GM12878 (cell line): ENCODE measurements at regions of chr14 and their contacts with region 1.

Region 1: DNA sequence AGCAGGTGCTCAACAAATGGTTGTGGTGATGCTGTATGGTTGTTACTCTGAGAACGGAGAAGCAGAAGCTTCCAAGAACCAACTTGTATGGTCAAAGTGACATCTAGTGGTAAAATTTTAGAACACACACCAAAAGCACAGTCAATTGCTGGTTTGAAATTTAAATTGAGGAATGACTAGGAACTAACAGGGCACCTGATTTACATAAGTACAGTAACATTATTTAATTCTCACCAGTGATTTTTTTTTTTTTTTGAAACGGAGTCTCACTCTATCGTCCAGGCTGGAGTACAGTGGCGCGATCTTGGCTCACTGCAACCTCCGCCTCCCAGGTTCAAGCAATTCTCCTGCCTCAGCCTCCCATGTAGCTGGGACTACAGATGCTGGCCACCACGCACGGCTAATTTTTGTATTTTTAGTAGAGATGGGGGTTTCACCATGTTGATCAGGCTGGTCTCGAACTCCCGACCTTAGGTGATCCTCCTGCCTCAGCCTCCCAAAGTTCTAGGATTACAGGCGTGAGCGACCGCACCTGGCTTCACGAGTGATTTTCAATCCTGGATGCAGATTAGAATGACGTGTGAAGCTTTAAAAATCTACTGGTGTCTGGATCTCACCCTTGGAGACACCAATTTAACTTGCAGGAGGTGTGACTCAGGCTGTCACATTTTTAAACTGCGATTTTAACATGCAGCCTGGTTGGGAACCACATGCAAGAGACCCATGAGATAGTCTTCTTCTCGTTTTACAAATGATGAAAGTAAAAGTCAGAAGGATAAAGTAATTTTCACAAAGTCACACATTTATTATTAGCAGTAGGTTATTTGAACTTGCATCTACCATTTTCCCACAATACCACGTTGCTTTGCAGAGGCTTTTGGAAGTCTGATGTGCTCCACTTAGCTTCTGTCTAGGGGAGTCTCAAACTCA is 14.1 kb upstream of the NUMB start:
- DNase-seq: peak; percentile 57
- ATAC-seq: peak; percentile 86
- H3K4me3 ChIP-seq: no peak overlapping the region
- H3K27ac ChIP-seq: peak overlapping the region; percentile 29; the same call in 1 of the 2 replicates
- H3K4me1 ChIP-seq: peaks cover 15% of the 10 kb centered on the region
- H3K27me3 ChIP-seq: no peaks in the 10 kb centered on the region
- CTCF ChIP-seq: peak; percentile 56 to 82 (median 65); a peak in 5 of 6 replicates
- EP300 ChIP-seq: peak in 1 of 2 experiments; percentile 39; a peak in 1 of 4 replicates
- POLR2A ChIP-seq: no peak
- RAD21 ChIP-seq: peak; percentile 99

Region 2: DNA sequence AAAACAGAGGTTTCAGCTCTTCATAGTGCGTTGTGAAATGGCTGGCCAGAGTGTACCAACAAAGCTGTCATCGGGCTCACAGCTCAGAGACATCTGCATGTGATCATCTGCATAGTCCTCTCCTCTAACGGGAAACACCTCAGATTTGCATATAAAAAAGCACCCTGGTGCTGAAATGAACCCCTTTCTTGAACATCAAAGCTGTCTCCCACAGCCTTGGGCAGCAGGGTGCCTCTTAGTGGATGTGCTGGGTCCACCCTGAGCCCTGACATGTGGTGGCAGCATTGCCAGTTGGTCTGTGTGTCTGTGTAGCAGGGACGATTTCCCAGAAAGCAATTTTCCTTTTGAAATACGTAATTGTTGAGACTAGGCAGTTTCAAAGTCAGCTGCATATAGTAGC is 249.4 kb before region 1 on chr14:
- CTCF ChIA-PET with region 1: interaction called, 75 read pairs
- POLR2A ChIA-PET with region 1: interaction called, 5 read pairs
- RAD21 ChIA-PET with region 1: interaction called, 11 read pairs
- SMC1A ChIA-PET with region 1: interaction called, 18 read pairs
- in situ Hi-C with region 1: no loop called
- intact Hi-C with region 1: no loop called
- DNase-seq: peak; percentile 63
- ATAC-seq: peak; percentile 96
- H3K4me3 ChIP-seq: no peak overlapping the region
- H3K27ac ChIP-seq: peak overlapping the region; percentile 20; the same call in 1 of the 2 replicates
- H3K4me1 ChIP-seq: peaks cover 9% of the 10 kb centered on the region; the same call in 1 of the 2 replicates
- H3K27me3 ChIP-seq: no peaks in the 10 kb centered on the region
- CTCF ChIP-seq: peak in 1 of 3 experiments; percentile 50; a peak in 2 of 6 replicates
- EP300 ChIP-seq: no peak
- POLR2A ChIP-seq: peak; percentile 49; the same call in 1 of the 2 replicates
- RAD21 ChIP-seq: peak; percentile 32; the same call in 1 of the 2 replicates

Region 3: DNA sequence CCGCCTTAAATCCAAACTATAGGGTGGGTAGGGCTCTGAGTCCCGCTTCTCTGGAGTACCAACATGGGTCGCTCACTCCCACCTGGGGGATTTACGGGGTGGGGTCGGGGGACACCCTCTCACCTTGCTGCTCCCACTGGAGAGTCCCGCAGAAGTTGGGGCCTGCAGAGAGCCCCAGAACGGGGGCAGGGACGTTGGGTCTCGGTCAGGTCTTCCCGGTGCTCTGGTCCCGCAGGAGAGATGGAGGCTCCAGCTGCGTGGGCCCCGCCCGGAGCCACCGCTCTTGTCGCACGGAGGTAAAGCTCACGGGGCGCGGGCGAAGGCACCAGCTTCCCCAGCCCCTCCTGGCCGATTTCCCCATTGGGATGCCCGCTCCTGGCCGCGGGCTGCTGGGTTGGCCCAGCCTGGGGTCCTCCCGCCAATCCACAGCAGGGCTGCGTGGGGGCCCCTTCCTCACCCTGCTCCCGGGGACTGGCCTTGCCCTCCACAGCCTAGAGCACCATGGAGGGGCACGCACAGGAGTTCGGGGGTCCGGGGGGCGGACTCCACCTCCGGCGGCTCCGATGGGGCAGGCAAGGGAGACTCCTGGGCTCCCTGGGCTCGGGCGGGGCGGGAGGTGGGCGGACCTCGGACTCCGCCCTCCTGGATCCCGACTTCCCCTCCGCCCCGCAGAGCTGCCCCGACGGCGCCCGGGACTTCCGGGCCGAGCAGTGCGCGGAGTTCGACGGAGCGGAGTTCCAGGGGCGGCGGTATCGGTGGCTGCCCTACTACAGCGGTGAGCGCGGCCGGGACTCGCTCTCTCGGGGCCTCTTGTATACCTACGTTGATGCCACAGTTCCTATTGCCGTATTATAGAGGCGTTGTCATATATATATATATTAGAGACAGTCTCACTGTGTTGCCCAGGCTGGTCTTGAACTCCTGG is 226.8 kb before region 1 on chr14:
- CTCF ChIA-PET with region 1: interaction called, 6 read pairs
- POLR2A ChIA-PET with region 1: interaction called, 4 read pairs
- RAD21 ChIA-PET with region 1: interaction called, 5 read pairs
- SMC1A ChIA-PET with region 1: interaction called, 8 read pairs
- in situ Hi-C with region 1: no loop called
- intact Hi-C with region 1: loop called (anchors 5 kb)
- DNase-seq: no peak
- ATAC-seq: peak; percentile 71
- H3K4me3 ChIP-seq: peak overlapping the region; percentile 66
- H3K27ac ChIP-seq: peak overlapping the region; percentile 15
- H3K4me1 ChIP-seq: peaks cover 58% of the 10 kb centered on the region
- H3K27me3 ChIP-seq: no peaks in the 10 kb centered on the region
- CTCF ChIP-seq: no peak
- EP300 ChIP-seq: no peak
- POLR2A ChIP-seq: peak; percentile 71
- RAD21 ChIP-seq: no peak

Region 4: DNA sequence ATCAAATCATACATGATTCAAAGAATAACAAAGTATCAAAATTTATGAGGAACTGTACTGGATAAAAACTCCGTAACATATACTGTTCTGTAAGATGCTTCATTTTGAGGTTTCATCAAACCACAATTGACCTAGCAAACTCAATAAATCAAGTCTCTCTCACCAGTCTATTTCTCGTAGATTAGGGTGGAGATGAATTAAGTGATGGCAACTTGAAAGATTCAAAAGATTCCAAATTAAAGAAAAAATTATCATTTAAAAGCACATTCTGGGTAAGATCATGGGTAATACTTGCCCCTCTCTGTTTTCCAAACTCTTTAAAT is 160.8 kb before region 1 on chr14:
- CTCF ChIA-PET with region 1: interaction called, 4 read pairs
- POLR2A ChIA-PET with region 1: interaction called, 3 read pairs
- RAD21 ChIA-PET with region 1: interaction called, 10 read pairs
- SMC1A ChIA-PET with region 1: no interaction called
- in situ Hi-C with region 1: no loop called
- intact Hi-C with region 1: no loop called
- DNase-seq: no peak
- ATAC-seq: peak; percentile 39
- H3K4me3 ChIP-seq: no peak overlapping the region
- H3K27ac ChIP-seq: no peak overlapping the region
- H3K4me1 ChIP-seq: no peaks in the 10 kb centered on the region
- H3K27me3 ChIP-seq: no peaks in the 10 kb centered on the region
- CTCF ChIP-seq: no peak
- EP300 ChIP-seq: no peak
- POLR2A ChIP-seq: no peak
- RAD21 ChIP-seq: no peak

Region 5: DNA sequence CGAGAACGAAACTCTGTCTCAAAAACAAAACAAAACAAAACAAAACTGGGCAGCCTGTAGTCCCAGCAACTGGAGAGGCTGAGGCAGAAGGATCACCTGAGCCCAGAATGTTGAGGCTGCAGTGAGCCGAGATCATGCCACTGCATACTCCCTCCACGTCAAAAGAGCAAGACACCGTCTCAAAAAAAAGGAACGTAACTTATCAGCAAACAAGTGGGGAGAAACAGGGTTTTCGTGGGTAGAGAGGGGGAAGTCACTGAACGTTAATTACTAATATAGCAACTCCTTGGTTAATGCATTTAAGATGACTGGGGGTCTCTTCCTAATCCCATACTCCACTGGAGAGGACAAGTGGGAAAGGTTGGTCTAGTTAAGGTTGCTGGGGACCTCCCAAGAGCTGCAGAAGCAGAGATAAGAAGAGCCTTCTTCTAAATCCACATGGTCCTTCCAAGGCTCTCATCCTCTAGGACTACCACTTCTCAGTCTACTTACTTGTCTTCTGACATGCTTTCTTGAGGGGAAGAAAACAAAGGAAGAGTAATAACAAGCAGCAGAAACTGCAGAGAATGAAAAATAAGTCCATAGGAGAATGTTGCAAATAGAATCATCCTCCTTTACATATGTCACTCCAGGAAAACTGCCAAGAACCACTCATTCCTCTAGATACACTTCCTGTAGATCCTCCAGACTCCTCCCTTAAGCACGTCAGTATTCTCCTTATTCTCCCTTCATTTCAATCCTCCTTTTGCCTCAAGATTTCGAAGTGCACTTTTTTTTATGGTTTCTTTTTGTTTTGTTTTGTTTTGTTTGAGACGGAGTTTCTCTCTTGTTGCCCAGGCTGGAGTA is 19.9 kb before region 1 on chr14:
- CTCF ChIA-PET with region 1: interaction called, 21 read pairs
- POLR2A ChIA-PET with region 1: interaction called, 42 read pairs
- RAD21 ChIA-PET with region 1: interaction called, 18 read pairs
- SMC1A ChIA-PET with region 1: interaction called, 78 read pairs
- in situ Hi-C with region 1: no loop called
- intact Hi-C with region 1: no loop called
- DNase-seq: no peak
- ATAC-seq: peak; percentile 69
- H3K4me3 ChIP-seq: no peak overlapping the region; the same call in 1 of the 2 replicates
- H3K27ac ChIP-seq: peak overlapping the region; percentile 32; the same call in 1 of the 2 replicates
- H3K4me1 ChIP-seq: peaks cover 11% of the 10 kb centered on the region
- H3K27me3 ChIP-seq: no peaks in the 10 kb centered on the region
- CTCF ChIP-seq: no peak
- EP300 ChIP-seq: no peak
- POLR2A ChIP-seq: no peak
- RAD21 ChIP-seq: no peak

Region 6: DNA sequence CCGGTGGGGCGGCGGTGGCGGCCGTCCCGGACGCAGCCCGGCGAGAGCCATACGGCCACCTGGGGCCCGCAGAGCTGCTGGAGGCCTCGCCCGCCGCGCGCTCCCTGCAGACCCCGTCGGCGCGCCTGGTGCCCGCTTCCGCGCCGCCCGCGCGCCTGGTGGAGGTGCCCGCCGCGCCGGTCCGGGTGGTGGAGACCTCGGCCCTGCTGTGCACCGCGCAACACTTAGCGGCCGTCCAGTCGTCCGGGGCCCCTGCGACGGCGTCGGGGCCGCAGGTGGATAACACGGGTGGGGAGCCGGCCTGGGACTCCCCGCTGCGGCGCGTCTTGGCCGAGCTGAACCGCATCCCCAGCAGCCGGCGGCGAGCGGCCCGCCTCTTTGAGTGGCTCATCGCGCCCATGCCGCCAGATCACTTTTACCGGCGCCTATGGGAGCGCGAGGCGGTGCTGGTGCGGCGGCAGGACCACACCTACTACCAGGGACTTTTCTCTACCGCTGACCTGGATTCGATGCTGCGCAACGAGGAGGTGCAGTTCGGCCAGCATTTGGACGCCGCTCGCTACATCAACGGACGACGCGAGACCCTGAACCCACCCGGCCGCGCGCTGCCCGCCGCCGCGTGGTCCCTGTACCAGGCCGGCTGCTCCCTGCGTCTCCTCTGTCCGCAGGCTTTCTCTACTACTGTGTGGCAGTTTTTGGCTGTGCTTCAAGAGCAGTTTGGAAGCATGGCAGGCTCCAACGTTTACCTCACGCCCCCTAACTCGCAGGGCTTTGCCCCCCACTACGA is 19.0 kb after region 1 on chr14:
- CTCF ChIA-PET with region 1: interaction called, 7 read pairs
- POLR2A ChIA-PET with region 1: interaction called, 17 read pairs
- RAD21 ChIA-PET with region 1: interaction called, 14 read pairs
- SMC1A ChIA-PET with region 1: interaction called, 12 read pairs
- in situ Hi-C with region 1: no loop called
- intact Hi-C with region 1: no loop called
- DNase-seq: no peak
- ATAC-seq: peak; percentile 87
- H3K4me3 ChIP-seq: peak overlapping the region; percentile 80
- H3K27ac ChIP-seq: peak overlapping the region; percentile 72
- H3K4me1 ChIP-seq: peaks cover 17% of the 10 kb centered on the region
- H3K27me3 ChIP-seq: no peaks in the 10 kb centered on the region
- CTCF ChIP-seq: no peak
- EP300 ChIP-seq: no peak
- POLR2A ChIP-seq: no peak
- RAD21 ChIP-seq: no peak

Region 7: DNA sequence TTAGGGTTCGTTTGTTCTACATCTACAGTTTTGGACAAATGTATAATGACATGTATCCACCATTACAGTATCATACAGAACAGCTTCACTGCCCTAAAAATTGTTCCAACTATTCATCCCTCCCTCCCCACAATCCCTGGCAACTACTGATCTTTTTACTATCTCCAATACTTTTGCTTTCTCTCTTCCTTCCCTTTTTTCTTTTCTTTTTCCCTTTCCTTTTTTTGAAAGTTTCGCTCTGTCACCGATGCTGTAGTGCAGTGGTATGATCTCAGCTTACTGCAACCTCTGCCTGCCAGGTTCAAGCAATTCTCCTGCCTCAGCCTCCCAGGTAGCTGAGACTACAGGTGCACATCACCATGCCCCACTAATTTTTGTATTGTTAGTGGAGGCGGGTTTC is 116.7 kb after region 1 on chr14:
- CTCF ChIA-PET with region 1: no interaction called
- POLR2A ChIA-PET with region 1: no interaction called
- RAD21 ChIA-PET with region 1: no interaction called
- SMC1A ChIA-PET with region 1: no interaction called
- in situ Hi-C with region 1: no loop called
- intact Hi-C with region 1: no loop called
- DNase-seq: no peak
- ATAC-seq: no peak
- H3K4me3 ChIP-seq: no peak overlapping the region
- H3K27ac ChIP-seq: no peak overlapping the region
- H3K4me1 ChIP-seq: no peaks in the 10 kb centered on the region
- H3K27me3 ChIP-seq: no peaks in the 10 kb centered on the region
- CTCF ChIP-seq: no peak
- EP300 ChIP-seq: no peak
- POLR2A ChIP-seq: no peak
- RAD21 ChIP-seq: no peak

Region 8: DNA sequence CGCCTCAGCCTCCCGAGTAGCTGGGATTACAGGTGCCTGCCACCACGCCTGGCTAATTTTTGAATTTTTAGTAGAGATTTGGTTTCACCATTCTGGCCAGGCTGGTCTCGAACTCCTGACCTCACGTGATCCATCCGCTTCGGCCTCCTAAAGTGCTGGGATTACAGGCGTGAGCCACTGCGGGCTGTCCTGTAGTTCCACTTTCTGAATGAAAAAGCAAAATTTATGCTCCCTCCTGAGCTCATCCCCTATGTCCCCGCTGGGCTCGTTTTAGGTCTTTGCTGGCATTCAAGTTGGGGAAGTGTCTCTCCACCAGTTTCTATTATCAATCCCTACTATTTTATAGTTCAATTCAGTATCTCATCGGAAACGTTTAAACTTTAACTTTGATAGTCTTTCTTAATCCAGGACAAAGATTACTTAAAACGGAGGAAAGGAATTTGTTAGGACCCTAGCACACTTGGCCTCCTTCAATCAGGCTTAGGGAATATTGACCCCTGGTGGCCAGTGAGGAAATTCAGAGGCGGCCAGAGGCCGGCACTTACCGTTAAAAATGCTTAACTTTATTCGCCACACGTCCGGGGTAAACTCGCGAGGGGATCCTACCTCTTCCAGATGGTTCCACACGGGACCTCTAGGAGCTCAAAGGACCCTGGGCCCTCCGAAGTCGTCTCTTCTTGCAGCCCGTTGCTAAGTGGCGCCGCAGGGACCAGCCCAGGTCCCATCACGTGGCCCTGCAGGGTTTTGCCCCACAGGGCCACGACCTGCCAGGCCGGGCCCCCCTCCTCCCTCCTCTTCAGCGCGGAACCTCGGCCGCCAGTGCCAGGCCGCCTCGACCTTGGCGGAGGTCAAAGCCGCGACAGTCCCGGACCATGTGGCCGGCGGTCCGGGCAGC is 160.9 kb after region 1 on chr14:
- CTCF ChIA-PET with region 1: interaction called, 4 read pairs
- POLR2A ChIA-PET with region 1: no interaction called
- RAD21 ChIA-PET with region 1: interaction called, 16 read pairs
- SMC1A ChIA-PET with region 1: interaction called, 5 read pairs
- in situ Hi-C with region 1: no loop called
- intact Hi-C with region 1: no loop called
- DNase-seq: peak; percentile 48
- ATAC-seq: peak; percentile 94
- H3K4me3 ChIP-seq: peak overlapping the region; percentile 65
- H3K27ac ChIP-seq: no peak overlapping the region
- H3K4me1 ChIP-seq: peaks cover 8% of the 10 kb centered on the region
- H3K27me3 ChIP-seq: peaks cover 0 to 3% of the 10 kb centered on the region in 2 experiments; a peak in 1 of 4 replicates
- CTCF ChIP-seq: peak; percentile 78 to 93 (median 83); a peak in 5 of 6 replicates
- EP300 ChIP-seq: no peak
- POLR2A ChIP-seq: no peak
- RAD21 ChIP-seq: peak; percentile 96